PC-3 (cell line): ENCODE measurements at regions of chr14 and their contacts with region 1.

Region 1: GRCh38 chr14:71625891-71626701 is 306.1 kb upstream of the RGS6 start:
- DNase-seq: no peak
- ATAC-seq: no peak
- H3K4me3 ChIP-seq: no peak overlapping the region
- H3K27ac ChIP-seq: no peak overlapping the region
- H3K4me1 ChIP-seq: peaks cover 23% of the 10 kb centered on the region
- H3K27me3 ChIP-seq: no peaks in the 10 kb centered on the region
- CTCF ChIP-seq: no peak

Region 2: DNA sequence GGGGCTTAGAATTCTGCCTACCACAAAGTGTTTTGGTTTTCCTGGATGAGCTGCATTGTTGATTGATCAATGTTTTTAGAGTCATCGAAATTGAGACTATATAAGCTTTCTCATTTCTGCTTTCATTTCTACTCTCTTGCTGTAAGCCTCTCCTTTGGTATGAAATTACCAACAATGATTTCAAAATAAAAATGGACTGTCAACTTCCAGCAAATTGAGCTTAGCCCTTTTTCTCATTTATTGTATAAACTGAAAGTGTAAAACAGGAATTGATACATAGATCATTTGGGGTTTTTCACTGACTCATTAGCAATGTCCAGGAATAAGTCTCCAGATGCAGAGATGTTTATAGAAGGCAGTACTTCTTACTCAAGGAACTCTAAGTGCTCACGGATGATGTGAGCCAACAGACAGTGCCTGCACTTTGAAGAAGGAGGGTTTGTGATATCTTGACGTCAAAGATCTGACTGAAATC is 738.9 kb before region 1 on chr14:
- CTCF ChIA-PET with region 1: no interaction called
- POLR2A ChIA-PET with region 1: no interaction called
- intact Hi-C with region 1: no loop called
- DNase-seq: no peak
- ATAC-seq: no peak
- H3K4me3 ChIP-seq: no peak overlapping the region
- H3K27ac ChIP-seq: no peak overlapping the region
- H3K4me1 ChIP-seq: no peaks in the 10 kb centered on the region
- H3K27me3 ChIP-seq: peaks cover 16% of the 10 kb centered on the region; the same call in 1 of the 2 replicates
- CTCF ChIP-seq: no peak

Region 3: DNA sequence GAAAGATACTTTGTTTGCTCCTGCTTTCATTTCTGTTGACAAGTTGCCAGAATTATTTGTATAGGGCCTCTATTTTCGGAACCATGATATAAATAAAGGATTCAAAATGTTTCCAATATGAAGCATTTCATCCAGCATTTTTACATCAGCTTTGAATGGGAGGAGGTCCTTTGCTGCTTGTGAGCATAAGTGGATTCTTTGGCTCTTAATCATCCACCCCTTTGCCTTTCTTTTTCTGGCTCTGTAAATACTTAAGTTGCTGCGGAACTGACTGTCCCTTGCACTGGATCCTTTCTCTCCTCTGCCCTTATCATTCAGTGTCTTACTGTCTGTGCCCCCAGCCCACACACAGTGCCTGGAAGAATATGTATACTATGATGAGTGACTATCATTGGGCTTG is 51.1 kb before region 1 on chr14:
- CTCF ChIA-PET with region 1: no interaction called
- POLR2A ChIA-PET with region 1: no interaction called
- intact Hi-C with region 1: loop called (anchors 5 kb)
- DNase-seq: peak; percentile 89
- ATAC-seq: peak; percentile 90
- H3K4me3 ChIP-seq: peak overlapping the region; percentile 13; the same call in 1 of the 2 replicates
- H3K27ac ChIP-seq: no peak overlapping the region
- H3K4me1 ChIP-seq: peaks cover 30% of the 10 kb centered on the region
- H3K27me3 ChIP-seq: no peaks in the 10 kb centered on the region
- CTCF ChIP-seq: no peak

Region 4: GRCh38 chr14:71591929-71592328 is 34.2 kb before region 1 on chr14:
- CTCF ChIA-PET with region 1: no interaction called
- POLR2A ChIA-PET with region 1: no interaction called
- intact Hi-C with region 1: no loop called
- DNase-seq: peak; percentile 66
- ATAC-seq: peak; percentile 95
- H3K4me3 ChIP-seq: no peak overlapping the region
- H3K27ac ChIP-seq: 0 out of 2 replicates have a peak overlapping the region, but pooled peaks have one; percentile 0
- H3K4me1 ChIP-seq: peaks cover 15% of the 10 kb centered on the region
- H3K27me3 ChIP-seq: no peaks in the 10 kb centered on the region
- CTCF ChIP-seq: no peak